PC-3 (cell line): ENCODE measurements at regions of chr7 and their contacts with region 1.

Region 1: GRCh38 chr7:80552304-80552703 is 40.4 kb upstream of the GNAT3 start:
- DNase-seq: peak; percentile 76
- ATAC-seq: peak; percentile 51
- H3K4me3 ChIP-seq: no peak overlapping the region
- H3K27ac ChIP-seq: peak overlapping the region; percentile 74
- H3K4me1 ChIP-seq: peaks cover 38% of the 10 kb centered on the region
- H3K27me3 ChIP-seq: no peaks in the 10 kb centered on the region
- CTCF ChIP-seq: no peak

Region 2: GRCh38 chr7:78770422-78771410 is 1781.6 kb before region 1 on chr7:
- CTCF ChIA-PET with region 1: no interaction called
- POLR2A ChIA-PET with region 1: no interaction called
- intact Hi-C with region 1: no loop called
- DNase-seq: no peak
- ATAC-seq: no peak
- H3K4me3 ChIP-seq: no peak overlapping the region
- H3K27ac ChIP-seq: no peak overlapping the region
- H3K4me1 ChIP-seq: no peaks in the 10 kb centered on the region
- H3K27me3 ChIP-seq: peaks cover 48% of the 10 kb centered on the region
- CTCF ChIP-seq: no peak

Region 3: DNA sequence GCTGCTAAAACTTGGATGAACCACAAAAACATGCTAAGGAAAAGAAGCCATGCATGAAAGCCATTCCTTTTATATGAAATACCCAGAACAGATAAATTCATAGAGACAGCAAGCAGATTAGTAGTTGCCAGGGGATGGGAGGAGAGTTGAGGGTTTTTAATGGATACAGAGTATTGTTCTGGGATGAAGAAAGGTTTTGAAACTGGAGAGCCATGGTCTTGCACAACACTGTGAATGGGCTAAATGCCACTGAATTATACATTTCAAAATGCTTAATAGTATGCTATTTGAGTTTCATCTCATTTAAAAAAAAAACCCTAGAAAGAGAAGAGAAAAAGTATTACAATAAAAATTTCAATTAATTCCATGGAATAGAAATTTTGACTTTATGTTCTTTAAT is 194.8 kb before region 1 on chr7:
- CTCF ChIA-PET with region 1: no interaction called
- POLR2A ChIA-PET with region 1: no interaction called
- intact Hi-C with region 1: no loop called
- DNase-seq: no peak
- ATAC-seq: no peak
- H3K4me3 ChIP-seq: no peak overlapping the region
- H3K27ac ChIP-seq: no peak overlapping the region
- H3K4me1 ChIP-seq: peaks cover 16% of the 10 kb centered on the region
- H3K27me3 ChIP-seq: no peaks in the 10 kb centered on the region
- CTCF ChIP-seq: no peak

Region 4: DNA sequence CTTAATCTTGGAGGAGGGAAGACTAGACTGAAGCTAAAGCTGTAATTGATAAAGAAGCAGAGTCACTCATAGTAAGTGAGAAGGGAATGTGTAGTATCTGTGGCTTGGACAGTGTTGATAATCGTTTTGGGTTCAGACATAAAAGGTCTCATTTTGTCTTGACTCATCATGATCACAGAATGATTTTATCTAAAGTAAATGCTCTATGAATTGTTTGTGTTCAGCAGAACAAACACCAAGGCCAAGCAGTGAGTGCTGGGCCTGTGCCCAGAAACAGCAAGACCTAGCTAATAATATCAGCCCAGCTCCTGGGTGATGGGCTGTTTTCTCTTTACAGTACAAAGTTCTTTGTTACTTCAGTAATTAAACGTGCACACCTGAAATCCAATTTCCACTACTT is 59.5 kb after region 1 on chr7:
- CTCF ChIA-PET with region 1: no interaction called
- POLR2A ChIA-PET with region 1: no interaction called
- intact Hi-C with region 1: loop called (anchors 5 kb)
- DNase-seq: peak; percentile 87
- ATAC-seq: peak; percentile 94
- H3K4me3 ChIP-seq: no peak overlapping the region
- H3K27ac ChIP-seq: peak overlapping the region; percentile 71
- H3K4me1 ChIP-seq: peaks cover 41% of the 10 kb centered on the region
- H3K27me3 ChIP-seq: no peaks in the 10 kb centered on the region
- CTCF ChIP-seq: no peak